ENCODE measurements at regions of chr1 and their contacts with region 1.

Region 1: DNA sequence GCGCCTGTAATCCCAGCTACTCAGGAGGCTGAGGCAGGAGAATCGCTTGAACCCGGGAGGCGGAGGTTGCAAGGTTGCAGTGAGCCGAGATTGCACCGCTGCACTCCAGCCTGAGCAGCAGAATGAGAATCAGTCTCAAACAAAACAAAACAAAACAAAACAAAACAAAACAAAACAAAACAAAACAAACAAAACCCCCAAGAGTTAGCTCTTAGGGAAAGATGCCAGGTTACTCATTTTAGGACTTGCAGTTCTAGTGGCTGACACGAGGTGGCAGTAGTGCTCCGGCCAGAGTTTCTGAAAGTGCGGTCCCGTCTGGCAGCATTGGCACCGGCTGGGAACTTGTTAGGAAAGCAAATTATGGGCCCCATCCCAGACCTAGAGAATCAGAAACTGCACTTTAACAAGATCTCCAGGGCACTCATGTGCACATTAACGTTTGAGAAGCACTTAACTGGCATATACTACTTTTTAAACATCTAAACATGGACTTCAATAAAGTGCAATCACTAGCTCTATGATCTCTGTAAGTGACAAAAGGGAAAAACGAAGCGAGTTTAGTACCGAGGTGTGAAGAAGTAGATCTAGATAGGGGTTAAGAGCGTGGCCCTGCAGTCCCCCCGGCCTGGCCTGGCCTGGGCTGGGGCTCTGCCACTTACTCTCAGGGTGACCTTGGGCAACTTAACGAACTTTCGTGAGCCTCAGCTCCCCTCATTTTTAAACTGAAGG is 41.9 kb upstream of the TNFRSF1B start:
- DNase-seq: peak; percentile 86
- ATAC-seq: peak; percentile 50
- H3K4me3 Mint-ChIP-seq: no peak overlapping the region
- H3K27ac Mint-ChIP-seq: peak overlapping the region; percentile 35
- H3K4me1 Mint-ChIP-seq: peaks cover 45% of the 10 kb centered on the region
- H3K27me3 Mint-ChIP-seq: peaks cover 15% of the 10 kb centered on the region

Region 2: DNA sequence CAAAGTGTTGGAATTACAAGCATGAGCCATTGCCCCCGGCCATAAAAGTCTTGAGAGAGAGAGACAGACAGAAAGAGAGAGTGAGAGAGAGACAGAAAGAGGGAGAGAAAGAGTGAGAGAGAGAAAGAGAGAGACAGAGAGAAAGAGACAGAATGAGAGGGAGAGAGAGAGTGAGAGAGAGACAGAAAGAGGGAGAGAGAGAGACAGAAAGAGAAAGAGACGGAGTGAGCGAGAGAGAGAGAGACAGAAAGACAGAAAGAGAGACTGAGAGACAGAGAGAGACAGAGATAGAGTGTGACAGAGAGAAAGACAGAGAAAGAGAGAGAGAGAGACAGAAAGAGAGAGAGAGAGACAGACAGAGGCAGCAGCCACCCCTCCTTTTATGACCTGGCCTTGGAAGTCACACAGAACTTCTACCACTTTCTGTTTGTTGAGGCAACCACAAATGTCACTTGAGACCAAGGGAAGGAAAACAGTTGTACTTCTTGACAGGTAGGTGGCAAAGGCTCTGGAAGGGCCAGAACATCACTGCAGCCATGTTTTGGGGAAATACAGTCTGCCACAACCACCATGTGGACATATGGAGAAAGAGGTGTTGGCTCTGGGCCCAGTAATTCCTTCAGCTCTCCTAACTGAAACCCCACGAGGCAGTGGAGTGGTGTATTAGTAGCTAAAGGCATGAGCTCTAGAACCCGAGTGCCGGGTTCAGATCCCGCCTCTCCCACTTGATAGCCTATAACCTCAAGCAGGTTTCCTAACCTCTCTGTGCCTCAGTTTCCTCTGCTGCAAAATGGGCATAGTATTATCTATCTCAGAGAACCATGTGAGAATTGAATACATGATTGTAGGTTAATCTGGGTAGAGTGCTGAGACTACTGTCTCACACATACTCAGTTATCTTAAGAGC is 11.2 kb before region 1 on chr1:
- CTCF ChIA-PET with region 1: interaction called, 21 read pairs
- POLR2A ChIA-PET with region 1: no interaction called
- DNase-seq: peak; percentile 56
- ATAC-seq: peak; percentile 71
- H3K4me3 Mint-ChIP-seq: no peak overlapping the region
- H3K27ac Mint-ChIP-seq: peak overlapping the region; percentile 51
- H3K4me1 Mint-ChIP-seq: peaks cover 16% of the 10 kb centered on the region
- H3K27me3 Mint-ChIP-seq: no peaks in the 10 kb centered on the region

Region 3: GRCh38 chr1:12166834-12167492 is 42.1 kb after region 1 on chr1 and contains the start of gene TNFRSF1B:
- CTCF ChIA-PET with region 1: interaction called, 40 read pairs
- POLR2A ChIA-PET with region 1: interaction called, 7 read pairs
- DNase-seq: peak; percentile 74
- ATAC-seq: peak; percentile 67
- H3K4me3 Mint-ChIP-seq: peak within 1 kb of the TSS; percentile 100
- H3K27ac Mint-ChIP-seq: peak within 1 kb of the TSS; percentile 97
- H3K4me1 Mint-ChIP-seq: peaks cover 77% of the 10 kb centered on the region
- H3K27me3 Mint-ChIP-seq: no peaks in the 10 kb centered on the region
- total RNA-seq, gene TNFRSF1B: 274 to 284 TPM

Region 4: GRCh38 chr1:12196641-12197482 is 72.0 kb after region 1 on chr1:
- CTCF ChIA-PET with region 1: interaction called, 369 read pairs
- POLR2A ChIA-PET with region 1: no interaction called
- DNase-seq: no peak
- ATAC-seq: no peak
- H3K4me3 Mint-ChIP-seq: no peak overlapping the region
- H3K27ac Mint-ChIP-seq: no peak overlapping the region
- H3K4me1 Mint-ChIP-seq: peaks cover 66% of the 10 kb centered on the region
- H3K27me3 Mint-ChIP-seq: no peaks in the 10 kb centered on the region

Region 5: GRCh38 chr1:12229835-12230548 is 105.1 kb after region 1 on chr1 and contains the start of gene VPS13D:
- CTCF ChIA-PET with region 1: interaction called, 55 read pairs
- POLR2A ChIA-PET with region 1: no interaction called
- DNase-seq: peak; percentile 88
- ATAC-seq: peak; percentile 98
- H3K4me3 Mint-ChIP-seq: peak within 1 kb of the TSS; percentile 84
- H3K27ac Mint-ChIP-seq: peak within 1 kb of the TSS; percentile 61
- H3K4me1 Mint-ChIP-seq: peaks cover 14% of the 10 kb centered on the region
- H3K27me3 Mint-ChIP-seq: peaks cover 3% of the 10 kb centered on the region
- total RNA-seq, gene VPS13D: 32.5 to 39.9 TPM

Region 6: DNA sequence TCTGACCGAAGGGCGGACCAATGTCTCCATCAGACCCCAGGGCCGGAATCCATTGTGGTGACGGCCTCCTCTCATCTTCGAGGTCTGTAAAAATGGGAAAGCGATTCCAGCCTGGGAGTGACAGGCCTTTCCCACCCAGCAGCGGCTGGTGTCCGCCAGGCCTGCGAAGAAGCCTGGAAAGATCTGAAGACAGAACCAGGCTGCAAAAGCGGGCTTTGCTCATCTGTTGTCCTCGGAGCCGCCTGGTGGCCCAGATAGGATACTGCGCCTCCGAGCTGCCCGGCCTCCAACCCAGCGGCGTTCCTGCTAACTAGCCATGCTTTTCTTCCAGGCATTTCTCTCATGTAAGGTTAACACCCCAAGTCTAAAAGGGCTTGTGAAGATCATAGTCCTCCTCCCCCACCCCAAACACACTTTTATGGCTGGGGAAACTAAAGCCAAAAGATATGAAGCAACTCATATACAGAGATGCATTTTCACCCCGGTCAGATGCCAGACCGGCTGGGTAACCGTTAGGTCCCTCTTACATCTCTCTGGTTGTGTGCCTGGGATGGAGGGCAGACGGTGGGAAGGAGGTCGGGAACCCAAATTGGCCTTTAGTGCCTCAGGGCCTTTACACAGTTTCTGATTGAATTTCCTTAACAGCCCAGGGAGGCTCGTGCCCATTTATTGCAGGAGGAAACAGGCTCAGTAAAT is 495.1 kb after region 1 on chr1:
- CTCF ChIA-PET with region 1: interaction called, 14 read pairs
- POLR2A ChIA-PET with region 1: no interaction called
- DNase-seq: peak; percentile 86
- ATAC-seq: peak; percentile 41
- H3K4me3 Mint-ChIP-seq: peak overlapping the region; percentile 99
- H3K27ac Mint-ChIP-seq: peak overlapping the region; percentile 83
- H3K4me1 Mint-ChIP-seq: peaks cover 46% of the 10 kb centered on the region
- H3K27me3 Mint-ChIP-seq: no peaks in the 10 kb centered on the region